Right ventricle myocardium superior (tissue), 1 donor: ENCODE measurements at regions of chr17 and their contacts with region 1.

Region 1: GRCh38 chr17:7687908-7688807 is at the start of gene WRAP53:
- DNase-seq: peak; percentile 98
- ATAC-seq: peak; percentile 93
- total RNA-seq, gene WRAP53: 4.2 TPM

Region 2: GRCh38 chr17:7561028-7561575 is 127.1 kb before region 1 on chr17:
- intact Hi-C with region 1: no loop called
- DNase-seq: peak; percentile 94
- ATAC-seq: peak; percentile 82

Region 3: GRCh38 chr17:7632492-7632894 is 55.7 kb before region 1 on chr17:
- intact Hi-C with region 1: loop called (anchors 2 kb)
- DNase-seq: no peak
- ATAC-seq: no peak

Region 4: GRCh38 chr17:7755095-7755890 is 67.1 kb after region 1 on chr17:
- intact Hi-C with region 1: no loop called
- DNase-seq: no peak
- ATAC-seq: no peak

Region 5: DNA sequence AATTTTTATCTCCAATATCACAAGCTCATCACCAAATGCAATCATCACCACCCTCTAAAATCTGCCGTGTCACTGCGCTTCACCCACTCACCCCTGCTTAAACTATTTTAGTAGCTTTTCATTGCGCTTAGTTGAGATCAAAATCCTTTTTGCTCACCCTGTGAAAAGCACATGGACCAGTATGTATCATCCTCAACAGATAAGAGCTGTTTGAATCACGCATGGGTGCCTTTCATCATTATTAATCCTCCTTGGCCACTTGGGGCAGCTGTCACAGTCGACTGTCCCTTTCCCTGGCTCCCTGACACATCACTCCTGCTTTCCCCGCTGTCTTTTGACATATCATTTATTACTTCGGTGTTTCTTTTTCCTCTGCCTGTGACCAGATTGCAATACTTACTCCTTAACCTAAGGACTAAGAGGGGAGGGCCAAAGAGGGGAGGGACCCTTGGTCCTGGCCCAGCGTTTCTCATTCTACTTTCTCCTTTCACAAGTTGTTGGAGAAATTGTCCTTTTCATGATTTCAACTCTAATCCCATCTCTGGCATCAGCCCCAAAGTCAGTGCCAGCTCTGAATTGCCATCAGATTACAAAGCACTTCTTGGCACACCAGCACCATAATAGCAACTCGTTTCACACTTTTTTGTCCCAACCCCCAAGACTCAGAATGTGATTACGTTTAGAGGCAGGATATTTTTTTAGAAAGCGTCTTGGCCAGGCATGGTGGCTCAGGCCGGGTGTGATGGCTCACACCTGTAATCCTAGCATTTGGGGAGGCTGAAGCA is 137.2 kb after region 1 on chr17:
- intact Hi-C with region 1: no loop called
- DNase-seq: no peak
- ATAC-seq: no peak

Region 6: GRCh38 chr17:8029135-8029534 is 341.0 kb after region 1 on chr17:
- intact Hi-C with region 1: no loop called
- DNase-seq: no peak
- ATAC-seq: no peak